ENCODE measurements at regions of chr3 and their contacts with region 1.

Region 1: GRCh38 chr3:46976326-46977190 is at the start of gene CCDC12:
- DNase-seq: peak; percentile 86 to 99 (median 93)
- ATAC-seq: peak; percentile 77
- H3K4me3 ChIP-seq: peak within 1 kb of the TSS; percentile 90 to 91
- H3K4me3 Mint-ChIP-seq: peak within 1 kb of the TSS; percentile 100
- H3K27ac ChIP-seq: peak within 1 kb of the TSS; percentile 75 to 94
- H3K27ac Mint-ChIP-seq: peak within 1 kb of the TSS; percentile 99
- H3K4me1 ChIP-seq: peaks cover 65% of the 10 kb centered on the region
- H3K4me1 Mint-ChIP-seq: peaks cover 69% of the 10 kb centered on the region
- H3K27me3 ChIP-seq: no peaks in the 10 kb centered on the region
- H3K27me3 Mint-ChIP-seq: no peaks in the 10 kb centered on the region
- CTCF ChIP-seq: no peak
- total RNA-seq, gene CCDC12: 99.9 to 107 TPM

Region 2: GRCh38 chr3:46923559-46924350 is 52.8 kb before region 1 on chr3:
- CTCF ChIA-PET with region 1: interaction called, 3 read pairs
- POLR2A ChIA-PET with region 1: interaction called, 5 read pairs
- intact Hi-C with region 1: loop called in 1 of 2 experiments (anchors 5 kb)
- DNase-seq: peak in 7 of 9 experiments; percentile 16 to 61 (median 48)
- ATAC-seq: peak; percentile 63
- H3K4me3 ChIP-seq: no peak overlapping the region
- H3K4me3 Mint-ChIP-seq: no peak overlapping the region
- H3K27ac ChIP-seq: no peak overlapping the region
- H3K27ac Mint-ChIP-seq: peak overlapping the region; percentile 77
- H3K4me1 ChIP-seq: peaks cover 28% of the 10 kb centered on the region
- H3K4me1 Mint-ChIP-seq: peaks cover 29% of the 10 kb centered on the region
- H3K27me3 ChIP-seq: no peaks in the 10 kb centered on the region
- H3K27me3 Mint-ChIP-seq: no peaks in the 10 kb centered on the region
- CTCF ChIP-seq: peak; percentile 46

Region 3: DNA sequence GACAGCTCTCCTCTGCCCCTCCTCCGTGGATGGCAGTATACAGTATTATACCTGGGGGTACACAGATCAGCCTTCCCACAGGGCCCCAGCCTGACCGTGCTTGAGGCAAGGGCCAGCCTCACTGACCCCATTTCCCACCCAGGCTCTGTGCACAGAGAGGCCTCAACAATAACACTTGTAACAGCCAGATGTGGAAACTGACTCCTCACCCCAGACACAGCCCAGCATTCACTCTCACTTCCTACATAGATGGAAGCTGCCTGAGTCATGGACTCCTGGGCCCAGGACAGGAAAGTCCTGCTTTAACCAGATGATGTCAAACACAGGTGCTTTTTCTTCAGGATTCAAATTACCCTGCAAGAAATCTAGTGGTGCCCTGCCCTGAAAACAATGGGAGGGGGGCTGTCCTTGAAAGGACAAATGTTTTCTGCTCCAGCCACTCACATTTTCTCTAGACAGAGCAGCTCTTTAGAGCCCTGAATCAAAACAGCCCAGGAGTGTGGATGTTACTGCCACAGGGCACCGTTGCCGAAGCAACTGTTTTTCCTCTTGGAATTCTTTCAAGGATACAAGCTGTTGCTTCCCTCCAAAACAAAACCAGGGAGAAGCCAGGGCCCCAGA is 16.4 kb before region 1 on chr3:
- CTCF ChIA-PET with region 1: no interaction called
- POLR2A ChIA-PET with region 1: interaction called, 5 read pairs
- intact Hi-C with region 1: loop called in 1 of 2 experiments (anchors 2 kb)
- DNase-seq: no peak
- ATAC-seq: no peak
- H3K4me3 ChIP-seq: no peak overlapping the region
- H3K4me3 Mint-ChIP-seq: peak overlapping the region; percentile 46
- H3K27ac ChIP-seq: peak overlapping the region in 1 of 2 experiments; percentile 77
- H3K27ac Mint-ChIP-seq: peak overlapping the region; percentile 93
- H3K4me1 ChIP-seq: peaks cover 65% of the 10 kb centered on the region
- H3K4me1 Mint-ChIP-seq: peaks cover 77% of the 10 kb centered on the region
- H3K27me3 ChIP-seq: no peaks in the 10 kb centered on the region
- H3K27me3 Mint-ChIP-seq: no peaks in the 10 kb centered on the region
- CTCF ChIP-seq: no peak

Region 4: GRCh38 chr3:47009225-47010110 is 32.9 kb after region 1 on chr3:
- CTCF ChIA-PET with region 1: interaction called, 4 read pairs
- POLR2A ChIA-PET with region 1: interaction called, 13 read pairs
- intact Hi-C with region 1: loop called in 1 of 2 experiments (anchors 1 kb)
- DNase-seq: peak; percentile 43 to 92 (median 86)
- ATAC-seq: peak; percentile 91
- H3K4me3 ChIP-seq: peak overlapping the region; percentile 52 to 66
- H3K4me3 Mint-ChIP-seq: peak overlapping the region; percentile 70
- H3K27ac ChIP-seq: peak overlapping the region; percentile 56 to 64
- H3K27ac Mint-ChIP-seq: peak overlapping the region; percentile 83
- H3K4me1 ChIP-seq: peaks cover 8% of the 10 kb centered on the region
- H3K4me1 Mint-ChIP-seq: peaks cover 8% of the 10 kb centered on the region
- H3K27me3 ChIP-seq: no peaks in the 10 kb centered on the region
- H3K27me3 Mint-ChIP-seq: no peaks in the 10 kb centered on the region
- CTCF ChIP-seq: no peak

Region 5: DNA sequence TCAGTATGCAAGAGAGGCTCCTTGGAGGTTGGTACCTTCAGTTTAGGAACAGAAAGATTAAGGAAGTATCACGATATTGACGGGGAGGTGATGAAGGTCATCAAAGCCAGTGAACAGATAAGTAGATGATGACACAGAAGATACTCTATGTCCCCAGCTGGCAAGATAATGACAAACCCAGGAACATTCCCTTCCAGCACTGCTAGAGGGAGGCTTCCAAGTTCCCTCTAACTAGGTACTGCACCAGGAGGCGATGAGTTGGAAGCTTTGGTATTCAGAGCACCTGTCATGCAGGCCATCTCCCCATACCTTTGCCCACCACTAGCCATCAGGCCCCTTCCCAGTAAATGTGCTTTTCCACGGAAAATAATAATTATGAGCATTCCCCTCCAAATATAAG is 43.8 kb after region 1 on chr3:
- CTCF ChIA-PET with region 1: no interaction called
- POLR2A ChIA-PET with region 1: no interaction called
- intact Hi-C with region 1: no loop called
- DNase-seq: no peak
- ATAC-seq: no peak
- H3K4me3 ChIP-seq: no peak overlapping the region
- H3K4me3 Mint-ChIP-seq: no peak overlapping the region
- H3K27ac ChIP-seq: no peak overlapping the region
- H3K27ac Mint-ChIP-seq: peak overlapping the region; percentile 63
- H3K4me1 ChIP-seq: peaks cover 20% of the 10 kb centered on the region
- H3K4me1 Mint-ChIP-seq: peaks cover 52% of the 10 kb centered on the region
- H3K27me3 ChIP-seq: no peaks in the 10 kb centered on the region
- H3K27me3 Mint-ChIP-seq: no peaks in the 10 kb centered on the region
- CTCF ChIP-seq: no peak

Region 6: GRCh38 chr3:47282424-47283192 is 306.1 kb after region 1 on chr3 and contains the starts of genes KIF9 and KLHL18:
- CTCF ChIA-PET with region 1: no interaction called
- POLR2A ChIA-PET with region 1: no interaction called
- intact Hi-C with region 1: loop called (anchors 1 to 5 kb)
- DNase-seq: peak; percentile 92 to 99 (median 96)
- ATAC-seq: peak; percentile 86
- H3K4me3 ChIP-seq: peak within 1 kb of the TSS; percentile 75 to 79
- H3K4me3 Mint-ChIP-seq: peak within 1 kb of the TSS; percentile 97
- H3K27ac ChIP-seq: peak within 1 kb of the TSS; percentile 98 to 99
- H3K27ac Mint-ChIP-seq: peak within 1 kb of the TSS; percentile 99
- H3K4me1 ChIP-seq: peaks cover 32% of the 10 kb centered on the region
- H3K4me1 Mint-ChIP-seq: peaks cover 40% of the 10 kb centered on the region
- H3K27me3 ChIP-seq: no peaks in the 10 kb centered on the region
- H3K27me3 Mint-ChIP-seq: no peaks in the 10 kb centered on the region
- CTCF ChIP-seq: no peak
- total RNA-seq, gene KIF9: 11.7 to 12.2 TPM
- total RNA-seq, gene KLHL18: 61.6 to 62.8 TPM